ENCODE measurements at regions of chr12 and their contacts with region 1.

Region 1: DNA sequence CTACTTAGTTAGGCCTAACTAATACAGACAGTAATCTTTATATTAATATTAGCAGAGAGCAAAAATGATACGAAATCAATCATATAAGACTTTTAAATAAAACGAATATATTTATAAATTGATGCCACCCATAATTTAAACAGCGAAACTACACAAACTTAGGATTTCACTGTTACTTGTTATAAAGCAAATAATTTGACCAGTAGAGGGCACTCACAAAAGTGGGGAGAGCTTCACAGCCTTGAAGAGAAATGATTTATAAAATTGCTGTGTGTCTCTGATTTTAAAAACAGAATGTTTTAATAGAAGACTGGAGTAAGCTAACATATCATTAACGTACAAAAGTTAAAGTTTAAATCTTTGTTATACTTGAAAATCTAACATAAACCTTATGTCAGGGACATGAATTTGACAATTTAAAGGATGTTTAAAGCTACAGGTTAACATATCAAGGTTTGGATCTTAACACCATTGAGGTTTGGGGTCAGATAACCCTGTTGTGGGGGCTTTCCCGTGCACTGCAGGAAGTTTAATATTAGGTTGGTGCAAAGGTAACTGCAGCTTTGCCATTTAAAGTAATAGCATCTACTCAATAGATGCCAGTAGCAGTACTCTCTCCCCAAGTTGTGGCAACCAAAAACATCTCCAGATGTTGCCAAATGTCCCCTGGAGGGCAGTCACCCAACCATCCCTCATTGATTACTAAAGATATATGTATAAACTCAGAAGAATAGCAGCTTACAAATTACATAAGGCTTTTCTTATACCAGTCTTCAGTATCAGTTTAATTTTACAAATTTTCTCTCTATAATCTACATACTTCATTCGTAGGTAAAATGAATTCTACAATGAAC is 9.3 kb downstream of the KRAS start:
- DNase-seq: peak; percentile 27
- H3K4me3 ChIP-seq: no peak overlapping the region; a peak in 1 of 4 replicates
- H3K27ac ChIP-seq: no peak overlapping the region; a peak in 1 of 4 replicates
- H3K4me1 ChIP-seq: peaks cover 0 to 3% of the 10 kb centered on the region in 2 experiments; a peak in 1 of 4 replicates
- H3K27me3 ChIP-seq: no peaks in the 10 kb centered on the region
- CTCF ChIP-seq: peak; percentile 87
- EP300 ChIP-seq: no peak
- RAD21 ChIP-seq: peak; percentile 72

Region 2: DNA sequence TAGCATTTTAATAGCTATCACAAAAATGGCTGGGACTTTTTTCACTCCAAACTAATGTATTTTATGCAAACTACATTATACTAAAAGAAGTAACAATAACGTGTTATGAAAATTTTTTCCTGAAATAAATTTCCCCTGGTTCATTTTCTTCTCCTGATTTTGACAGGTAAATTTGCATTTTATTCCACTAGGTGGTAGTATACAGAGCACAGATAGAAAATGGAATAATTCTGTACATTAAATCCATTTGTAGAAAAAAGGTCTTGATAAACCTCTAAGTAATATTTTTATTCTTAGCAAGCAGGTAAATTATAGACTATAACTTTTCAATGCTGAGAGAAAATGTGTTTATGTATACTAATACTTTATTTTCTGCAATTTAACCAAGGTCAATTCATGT is 389.0 kb before region 1 on chr12:
- CTCF ChIA-PET with region 1: no interaction called
- POLR2A ChIA-PET with region 1: no interaction called
- DNase-seq: no peak
- H3K4me3 ChIP-seq: no peak overlapping the region
- H3K27ac ChIP-seq: no peak overlapping the region
- H3K4me1 ChIP-seq: peaks cover 0 to 14% of the 10 kb centered on the region in 2 experiments; a peak in 3 of 4 replicates
- H3K27me3 ChIP-seq: no peaks in the 10 kb centered on the region
- CTCF ChIP-seq: peak; percentile 68
- EP300 ChIP-seq: no peak
- RAD21 ChIP-seq: peak; percentile 51

Region 3: DNA sequence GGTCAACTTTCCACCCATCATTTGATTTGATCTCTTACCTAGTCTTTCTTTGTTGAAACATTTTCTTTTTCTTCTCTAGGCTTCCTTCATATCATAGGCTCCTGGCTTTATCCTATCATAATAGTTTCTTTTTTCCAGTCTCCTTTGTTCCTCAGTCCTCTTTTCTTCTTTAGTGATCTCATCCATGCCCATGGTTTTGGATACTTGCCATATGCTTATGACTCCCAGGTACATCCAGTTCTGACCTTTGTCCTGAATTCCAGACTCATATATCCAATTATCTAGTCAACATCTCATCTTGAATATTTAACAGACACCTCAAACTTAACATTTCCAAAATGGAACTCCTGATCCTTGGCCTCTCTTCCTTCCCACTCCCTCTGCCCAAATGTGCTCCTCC is 45.4 kb after region 1 on chr12:
- CTCF ChIA-PET with region 1: no interaction called
- POLR2A ChIA-PET with region 1: no interaction called
- DNase-seq: no peak
- H3K4me3 ChIP-seq: no peak overlapping the region
- H3K27ac ChIP-seq: no peak overlapping the region
- H3K4me1 ChIP-seq: no peaks in the 10 kb centered on the region
- H3K27me3 ChIP-seq: no peaks in the 10 kb centered on the region
- CTCF ChIP-seq: no peak
- EP300 ChIP-seq: no peak
- RAD21 ChIP-seq: no peak

Region 4: GRCh38 chr12:25386831-25387731 is 145.7 kb after region 1 on chr12:
- CTCF ChIA-PET with region 1: interaction called, 17 read pairs
- POLR2A ChIA-PET with region 1: interaction called, 4 read pairs
- DNase-seq: peak; percentile 74
- H3K4me3 ChIP-seq: peak overlapping the region; percentile 73 to 96
- H3K27ac ChIP-seq: peak overlapping the region; percentile 82 to 100; a peak in 3 of 4 replicates
- H3K4me1 ChIP-seq: peaks cover 0 to 12% of the 10 kb centered on the region in 2 experiments; a peak in 2 of 4 replicates
- H3K27me3 ChIP-seq: no peaks in the 10 kb centered on the region
- CTCF ChIP-seq: peak; percentile 94
- EP300 ChIP-seq: no peak
- RAD21 ChIP-seq: peak; percentile 98

Region 5: GRCh38 chr12:25397001-25397400 is 155.6 kb after region 1 on chr12:
- CTCF ChIA-PET with region 1: interaction called, 10 read pairs
- POLR2A ChIA-PET with region 1: no interaction called
- DNase-seq: no peak
- H3K4me3 ChIP-seq: no peak overlapping the region
- H3K27ac ChIP-seq: no peak overlapping the region
- H3K4me1 ChIP-seq: no peaks in the 10 kb centered on the region
- H3K27me3 ChIP-seq: no peaks in the 10 kb centered on the region
- CTCF ChIP-seq: no peak
- EP300 ChIP-seq: no peak
- RAD21 ChIP-seq: no peak